ENCODE measurements at regions of chr6 and their contacts with region 1.

Region 1: DNA sequence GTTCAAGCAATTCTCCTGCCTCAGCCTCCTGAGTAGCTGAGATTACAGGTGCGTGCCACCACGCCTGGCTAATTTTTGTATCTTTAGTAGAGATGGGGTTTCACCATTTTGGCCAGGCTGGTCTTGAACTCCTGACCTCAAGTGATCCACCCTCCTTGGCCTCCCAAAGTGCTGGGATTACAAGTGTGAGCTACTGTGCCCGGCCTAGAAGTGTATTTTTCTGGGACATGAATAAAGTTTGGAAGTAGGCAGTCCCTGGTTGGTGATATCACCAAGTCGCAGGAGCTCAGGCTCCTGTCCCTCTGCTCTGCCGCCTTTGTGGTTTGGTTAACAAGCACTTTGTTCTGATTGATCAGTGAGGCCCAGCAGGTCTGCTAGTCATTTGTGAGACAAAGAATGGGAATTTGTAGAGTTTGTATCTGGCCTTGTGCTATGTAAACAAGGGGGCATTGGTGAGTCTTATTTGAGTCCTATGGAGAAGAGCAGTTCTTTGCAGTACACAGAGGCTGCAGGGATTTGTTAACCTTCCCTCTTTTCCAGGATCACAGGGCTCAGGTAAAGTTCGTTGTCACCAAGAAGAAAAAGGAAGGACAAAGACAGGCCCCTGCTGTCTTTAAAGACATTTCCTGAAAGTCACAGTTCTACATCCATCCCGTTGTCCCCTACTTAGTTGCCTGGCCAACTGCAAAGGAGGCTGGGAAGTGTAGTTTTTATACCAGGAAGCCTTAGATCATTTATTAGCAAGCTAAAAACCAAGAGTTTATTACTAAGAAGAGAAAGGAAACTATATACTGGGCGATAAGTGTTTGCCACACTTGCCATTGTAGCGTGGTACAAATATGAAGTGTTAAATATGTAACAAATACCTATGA is 13.1 kb downstream of the MTHFD1L start:
- DNase-seq: no peak
- ATAC-seq: no peak
- H3K4me3 ChIP-seq: no peak overlapping the region
- H3K27ac ChIP-seq: no peak overlapping the region
- H3K4me1 ChIP-seq: peaks cover 7% of the 10 kb centered on the region; the same call in 1 of the 2 replicates
- H3K27me3 ChIP-seq: no peaks in the 10 kb centered on the region
- CTCF ChIP-seq: no peak

Region 2: DNA sequence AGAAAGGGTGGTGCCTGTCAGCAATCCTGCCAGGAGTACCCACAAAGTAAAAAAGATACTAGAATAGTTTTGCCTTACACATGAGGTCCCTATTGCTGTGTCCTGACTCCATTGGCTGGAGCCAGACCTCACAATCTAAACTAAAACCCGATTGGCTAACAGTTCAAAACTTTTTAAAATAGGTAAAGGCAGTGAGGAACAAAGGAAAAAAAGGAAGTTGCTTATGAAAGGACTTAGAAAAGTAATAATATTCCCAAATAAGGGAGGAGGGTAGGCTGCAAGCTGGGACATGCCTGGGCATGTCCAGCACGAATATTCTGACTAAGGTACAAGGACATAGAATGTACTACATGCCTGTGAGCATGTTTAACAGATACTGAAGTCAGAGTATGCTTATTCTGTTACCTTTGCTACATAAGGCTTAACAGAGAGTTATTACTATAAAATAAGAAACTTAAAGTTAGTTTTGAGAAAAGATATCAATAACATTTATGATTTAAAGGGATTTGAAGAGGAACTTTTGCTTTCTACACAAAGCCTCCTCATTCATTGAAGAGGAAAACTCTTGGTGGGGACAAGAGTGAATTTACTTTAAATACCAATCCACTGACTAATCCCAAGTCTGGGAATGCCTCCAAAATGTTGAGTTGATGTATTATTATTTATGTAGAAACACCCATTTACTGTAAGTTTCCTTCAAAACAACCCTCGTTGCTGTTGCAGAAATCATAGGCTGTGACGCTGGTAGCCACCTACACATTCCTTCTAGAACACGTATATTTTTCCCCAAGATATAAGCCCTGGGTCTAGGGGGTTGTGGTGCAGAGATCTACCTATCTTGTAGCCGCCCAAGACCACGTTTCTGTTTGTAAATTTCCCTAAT is 21.3 kb before region 1 on chr6:
- CTCF ChIA-PET with region 1: no interaction called
- POLR2A ChIA-PET with region 1: interaction called, 10 read pairs
- in situ Hi-C with region 1: no loop called
- intact Hi-C with region 1: no loop called
- DNase-seq: no peak
- ATAC-seq: peak; percentile 76
- H3K4me3 ChIP-seq: no peak overlapping the region
- H3K27ac ChIP-seq: 0 out of 2 replicates have a peak overlapping the region, but pooled peaks have one; percentile 13
- H3K4me1 ChIP-seq: peaks cover 8% of the 10 kb centered on the region; the same call in 1 of the 2 replicates
- H3K27me3 ChIP-seq: no peaks in the 10 kb centered on the region
- CTCF ChIP-seq: no peak

Region 3: GRCh38 chr6:151036869-151037680 is 158.5 kb after region 1 on chr6:
- CTCF ChIA-PET with region 1: no interaction called
- POLR2A ChIA-PET with region 1: no interaction called
- in situ Hi-C with region 1: no loop called
- intact Hi-C with region 1: no loop called
- DNase-seq: no peak
- ATAC-seq: no peak
- H3K4me3 ChIP-seq: no peak overlapping the region
- H3K27ac ChIP-seq: peak overlapping the region; percentile 64
- H3K4me1 ChIP-seq: peaks cover 22% of the 10 kb centered on the region
- H3K27me3 ChIP-seq: no peaks in the 10 kb centered on the region
- CTCF ChIP-seq: no peak

Region 4: GRCh38 chr6:152380993-152381898 is 1502.7 kb after region 1 on chr6:
- CTCF ChIA-PET with region 1: no interaction called
- POLR2A ChIA-PET with region 1: no interaction called
- in situ Hi-C with region 1: no loop called
- intact Hi-C with region 1: no loop called
- DNase-seq: peak; percentile 15
- ATAC-seq: peak; percentile 87
- H3K4me3 ChIP-seq: peak overlapping the region; percentile 37 to 70
- H3K27ac ChIP-seq: peak overlapping the region; percentile 61
- H3K4me1 ChIP-seq: peaks cover 10% of the 10 kb centered on the region; the same call in 1 of the 2 replicates
- H3K27me3 ChIP-seq: no peaks in the 10 kb centered on the region
- CTCF ChIP-seq: no peak

Measured in Panc1 (cell line).